ENCODE measurements at regions of chr11 and their contacts with region 1.

Region 1: DNA sequence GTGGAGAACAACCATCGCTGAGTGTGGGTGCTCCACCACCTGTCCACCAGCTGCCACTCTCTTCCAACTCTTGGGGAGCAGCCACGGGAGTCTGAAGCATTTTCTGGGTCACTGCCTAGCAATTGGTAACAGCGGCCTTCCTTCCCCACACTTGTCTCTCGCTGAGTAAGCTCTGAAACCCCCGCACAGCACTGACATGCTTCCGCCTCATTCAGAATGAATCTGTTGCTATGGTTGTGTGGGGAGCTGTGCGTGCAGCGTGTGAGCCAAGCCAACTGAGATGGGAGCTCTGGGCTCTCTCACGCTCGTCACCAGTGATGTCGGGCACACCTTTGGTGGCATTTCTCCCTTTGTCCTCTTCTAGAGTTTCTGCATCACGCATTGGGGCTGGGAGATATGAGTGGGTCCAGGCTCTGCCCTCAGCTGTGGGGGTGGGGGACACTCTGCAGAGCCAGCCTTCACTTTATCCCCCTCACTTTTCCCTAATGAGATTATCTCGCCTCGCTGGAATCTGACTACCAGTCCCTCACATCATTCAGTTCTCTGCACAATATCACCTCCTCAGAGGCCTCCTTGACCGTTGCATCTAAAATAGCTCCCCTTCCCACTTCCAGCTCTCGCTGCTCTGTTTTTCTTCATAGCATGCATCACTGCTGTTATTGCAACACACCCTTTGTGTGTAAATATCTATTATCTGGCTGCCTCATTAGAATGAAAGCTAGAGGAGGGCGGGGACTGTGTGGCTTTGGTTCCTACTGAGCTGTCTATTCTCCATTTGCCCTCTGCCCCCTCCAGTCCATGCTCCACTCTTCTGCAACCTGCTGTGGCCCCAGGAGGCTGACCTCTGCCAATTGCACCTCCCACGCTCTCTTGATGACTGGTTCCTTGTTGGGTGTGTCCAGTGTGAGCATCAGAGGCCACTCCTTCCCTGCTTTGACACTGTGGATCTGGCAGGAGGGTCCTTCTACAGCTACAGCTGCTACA is 569.9 kb upstream of the CADM1 start:
- DNase-seq: peak; percentile 71
- CTCF ChIP-seq: no peak

Region 2: DNA sequence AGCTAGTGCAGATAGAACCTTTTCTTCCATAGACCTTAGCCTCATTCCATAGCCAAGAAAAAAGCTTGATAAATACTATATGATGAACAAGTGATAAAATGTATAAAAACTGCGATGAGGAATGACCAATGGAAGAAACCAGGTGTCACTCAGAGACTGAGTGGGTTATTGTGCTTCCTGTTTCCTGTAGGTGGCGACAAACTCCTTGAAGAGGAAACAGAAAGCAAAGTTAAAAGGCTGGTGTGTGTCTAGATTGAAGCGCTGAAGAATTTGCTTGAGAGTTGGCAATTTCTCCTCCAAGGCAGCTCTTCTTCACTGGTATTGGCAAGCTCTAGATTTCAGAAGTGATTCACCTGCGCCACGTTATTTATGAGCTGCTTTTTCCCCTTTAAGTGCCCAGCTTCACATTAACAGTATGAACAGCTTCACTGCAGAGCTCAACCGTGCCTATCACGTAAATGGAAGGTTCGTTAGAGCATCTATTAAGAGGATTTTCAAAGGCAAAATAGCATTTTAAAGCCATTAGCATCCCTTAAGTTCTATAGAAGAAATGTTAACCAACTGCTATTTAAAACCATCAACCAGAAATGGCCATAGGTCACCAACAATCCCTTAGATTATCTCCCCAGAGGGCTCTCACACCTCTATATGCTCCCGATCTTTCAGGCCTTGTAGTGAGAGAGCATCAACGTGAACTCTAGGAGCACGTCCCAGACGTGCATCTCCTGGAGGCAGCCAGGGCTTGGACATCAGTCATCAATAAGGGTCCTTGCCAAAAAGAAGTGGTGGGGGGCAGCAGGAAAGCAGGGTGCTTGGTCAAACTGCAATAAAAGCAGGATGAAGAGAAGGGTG is 749.3 kb before region 1 on chr11:
- in situ Hi-C with region 1: loop called (anchors 25 kb)
- DNase-seq: peak; percentile 38
- CTCF ChIP-seq: peak; percentile 79

Region 3: DNA sequence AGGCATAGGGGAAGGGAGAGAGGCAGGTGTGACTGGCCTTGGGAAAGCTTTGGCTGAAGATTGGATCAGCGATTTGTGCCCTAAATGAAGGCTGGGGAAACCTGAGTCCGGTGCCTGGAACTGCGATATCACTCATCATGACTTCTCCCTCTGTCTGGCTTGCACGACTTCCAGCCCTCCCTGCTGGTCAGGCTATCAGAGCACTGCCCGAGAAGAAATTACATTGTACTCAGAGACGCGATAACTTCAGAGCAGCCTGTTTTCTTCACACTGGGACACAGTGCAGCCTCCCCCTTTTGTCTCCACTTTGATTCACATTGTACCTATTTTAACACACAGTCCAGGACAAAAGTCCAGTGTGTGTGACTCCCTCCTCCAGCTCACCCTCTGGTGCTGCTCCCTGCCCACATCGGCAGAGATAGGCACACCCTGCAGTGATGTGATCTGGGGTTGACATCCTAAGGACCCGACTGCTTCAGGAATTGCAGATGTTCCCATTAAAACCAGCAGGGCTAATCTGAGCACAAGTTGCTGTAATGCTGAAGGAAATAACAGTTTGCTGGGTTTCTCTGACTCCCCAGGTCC is 507.9 kb before region 1 on chr11:
- in situ Hi-C with region 1: no loop called
- DNase-seq: no peak
- CTCF ChIP-seq: no peak

Region 4: GRCh38 chr11:115924744-115925567 is 149.2 kb before region 1 on chr11:
- in situ Hi-C with region 1: loop called (anchors 5 kb)
- DNase-seq: peak; percentile 60
- CTCF ChIP-seq: no peak

Region 5: DNA sequence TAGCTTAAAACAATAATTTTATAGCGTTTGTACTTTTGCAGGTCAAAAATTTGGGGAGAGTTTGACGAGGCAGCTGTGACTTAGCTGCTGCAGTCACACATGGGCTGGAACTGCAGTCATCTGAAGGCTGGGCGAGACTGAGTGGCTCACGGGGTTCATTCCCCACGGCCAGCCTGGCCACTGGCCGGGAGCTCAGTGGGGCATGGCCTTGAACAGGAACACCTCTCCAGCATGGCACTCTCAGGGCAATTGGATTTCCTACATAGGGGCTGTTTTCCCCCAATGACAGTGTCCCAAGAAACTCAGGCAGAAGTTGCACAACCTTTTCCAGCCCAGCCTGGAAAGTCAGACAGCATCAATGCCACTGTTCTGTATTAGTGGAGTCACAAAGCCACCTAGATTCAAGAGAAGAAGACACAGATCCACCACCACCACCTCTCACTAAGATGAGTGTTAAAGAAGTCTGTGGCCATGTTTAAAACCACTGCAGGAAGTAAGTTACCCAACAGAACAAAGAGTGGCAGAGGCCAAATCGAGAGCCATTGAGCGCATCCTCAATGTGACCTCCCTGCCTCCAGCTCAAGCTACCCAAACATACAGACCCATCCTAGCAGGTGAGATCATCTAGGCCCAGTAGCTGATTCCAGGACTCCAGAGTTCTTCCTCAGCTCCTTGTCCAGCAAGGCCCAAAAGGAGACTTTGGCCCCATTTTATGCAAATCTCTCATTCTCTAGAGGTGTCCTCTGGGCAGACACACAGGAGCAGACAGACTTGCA is 48.7 kb after region 1 on chr11:
- in situ Hi-C with region 1: no loop called
- DNase-seq: no peak
- CTCF ChIP-seq: no peak

Measured in GM13976 (cell line).